Left lung (tissue), 14 donors: ENCODE measurements at regions of chr3 and their contacts with region 1.

Region 1: DNA sequence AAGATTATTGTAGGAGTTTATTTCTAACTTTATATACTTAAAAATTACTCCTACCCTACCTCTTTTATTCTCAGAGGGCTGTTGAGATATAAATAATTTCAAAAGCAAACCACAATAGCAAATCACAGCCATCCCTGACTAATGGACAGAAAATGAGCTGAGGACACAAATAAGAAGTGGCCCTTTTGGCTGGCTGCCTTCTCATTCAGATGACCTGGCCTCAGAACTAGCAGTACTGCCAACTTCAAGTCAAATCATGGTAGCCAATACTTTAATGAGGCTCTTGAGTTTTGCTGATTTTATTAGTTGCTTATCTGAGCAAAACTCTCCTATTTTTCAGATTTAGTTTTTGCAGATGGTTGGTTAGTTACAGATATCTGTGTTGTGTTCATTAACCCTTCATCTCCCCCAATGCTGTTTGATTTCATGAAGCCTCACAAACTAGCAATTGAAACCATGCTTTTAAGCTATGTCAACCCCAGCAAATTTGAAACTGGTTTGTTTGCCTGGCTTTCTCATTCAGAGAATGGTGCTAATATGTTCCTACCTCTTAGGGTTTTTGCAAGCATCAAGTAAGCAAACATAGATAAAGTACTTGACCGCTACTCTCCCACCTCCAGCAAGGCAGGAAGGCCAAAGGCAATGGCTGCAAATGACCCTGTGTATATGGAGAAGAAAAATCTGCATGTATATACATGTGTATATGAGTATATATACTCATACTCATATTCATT is 73.4 kb upstream of the HACD2 start:
- DNase-seq: peak in 3 of 4 donors; percentile 70 to 84 (median 78)
- ATAC-seq: peak; percentile 56
- H3K4me3 ChIP-seq: no peak overlapping the region
- H3K27ac ChIP-seq: peak overlapping the region; percentile 64 to 86
- H3K4me1 ChIP-seq: peaks cover 60 to 80% of the 10 kb centered on the region in 2 donors
- H3K27me3 ChIP-seq: no peaks in the 10 kb centered on the region
- CTCF ChIP-seq: no peak

Region 2: DNA sequence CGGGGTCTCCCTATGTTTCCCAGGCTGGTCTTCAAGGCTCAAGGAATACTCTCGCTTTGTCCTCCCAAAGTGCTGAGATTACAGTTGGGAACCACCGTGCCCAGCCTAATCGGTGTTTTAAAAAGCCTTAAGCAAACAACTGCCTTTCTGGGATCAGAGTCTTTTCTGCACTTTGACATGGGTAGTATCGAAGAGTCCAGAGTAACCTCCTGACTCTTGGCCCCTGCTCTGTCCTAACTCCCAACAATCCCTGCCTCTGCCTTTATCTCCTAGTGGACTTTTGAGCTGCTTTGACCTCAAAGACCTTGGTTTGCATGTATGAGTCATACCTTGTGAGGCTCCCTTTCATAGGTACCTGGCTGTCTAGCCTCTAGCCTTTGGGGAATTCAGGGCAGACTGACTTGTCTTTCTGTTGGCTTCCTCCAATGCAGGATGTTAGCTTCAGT is 52.5 kb before region 1 on chr3:
- intact Hi-C with region 1: no loop called
- DNase-seq: no peak
- ATAC-seq: peak; percentile 72
- H3K4me3 ChIP-seq: no peak overlapping the region
- H3K27ac ChIP-seq: peak overlapping the region; percentile 48 to 79
- H3K4me1 ChIP-seq: peaks cover 4 to 18% of the 10 kb centered on the region in 2 donors
- H3K27me3 ChIP-seq: no peaks in the 10 kb centered on the region
- CTCF ChIP-seq: no peak

Region 3: DNA sequence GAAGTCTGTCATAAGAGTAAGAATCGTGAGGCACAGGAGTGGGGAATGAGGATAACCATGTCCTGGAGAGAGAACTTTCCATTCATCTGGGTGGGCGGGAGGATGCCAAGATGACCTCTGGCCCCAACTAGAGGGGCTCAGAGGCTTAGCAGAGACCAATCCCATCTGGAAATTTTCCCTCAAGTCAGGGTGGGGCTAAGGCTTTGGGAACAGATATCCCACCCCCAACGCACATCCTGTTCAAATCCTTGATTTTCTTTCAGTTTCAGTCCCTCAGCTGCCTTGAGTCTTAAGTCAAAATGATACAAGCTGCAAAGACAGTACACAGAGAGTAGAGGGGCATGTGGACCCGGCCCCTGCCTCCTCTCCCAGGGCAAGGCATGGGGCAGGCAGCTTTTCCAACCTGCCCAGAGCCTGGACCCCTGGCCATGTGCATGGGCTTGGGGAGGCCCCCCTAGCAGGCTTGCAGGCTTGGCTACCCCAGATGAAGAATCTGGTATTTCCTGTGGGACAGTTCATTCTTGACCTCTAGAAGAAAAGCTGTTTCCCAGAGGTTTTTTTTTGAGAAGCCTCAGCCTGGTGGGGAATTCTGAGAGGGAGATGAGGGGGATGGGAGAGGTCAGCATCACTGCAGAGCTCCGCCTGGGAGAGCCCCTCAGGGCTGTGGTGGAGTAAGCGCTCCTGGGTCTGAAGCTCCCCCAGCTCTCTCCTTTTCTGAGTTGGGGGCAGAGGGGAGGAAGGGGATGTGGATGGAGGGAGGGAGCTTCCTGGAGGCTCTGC is 36.3 kb after region 1 on chr3:
- intact Hi-C with region 1: loop called in 1 of 2 experiments (anchors 5 kb)
- DNase-seq: no peak
- ATAC-seq: no peak
- H3K4me3 ChIP-seq: no peak overlapping the region
- H3K27ac ChIP-seq: peak overlapping the region; percentile 48 to 74
- H3K4me1 ChIP-seq: peaks cover 19 to 48% of the 10 kb centered on the region in 2 donors
- H3K27me3 ChIP-seq: no peaks in the 10 kb centered on the region
- CTCF ChIP-seq: no peak

Region 4: GRCh38 chr3:123778991-123779622 is 120.8 kb after region 1 on chr3:
- intact Hi-C with region 1: no loop called
- DNase-seq: no peak
- ATAC-seq: peak; percentile 32
- H3K4me3 ChIP-seq: no peak overlapping the region
- H3K27ac ChIP-seq: no peak overlapping the region
- H3K4me1 ChIP-seq: peaks cover 3 to 8% of the 10 kb centered on the region in 2 donors
- H3K27me3 ChIP-seq: no peaks in the 10 kb centered on the region
- CTCF ChIP-seq: no peak

Region 5: DNA sequence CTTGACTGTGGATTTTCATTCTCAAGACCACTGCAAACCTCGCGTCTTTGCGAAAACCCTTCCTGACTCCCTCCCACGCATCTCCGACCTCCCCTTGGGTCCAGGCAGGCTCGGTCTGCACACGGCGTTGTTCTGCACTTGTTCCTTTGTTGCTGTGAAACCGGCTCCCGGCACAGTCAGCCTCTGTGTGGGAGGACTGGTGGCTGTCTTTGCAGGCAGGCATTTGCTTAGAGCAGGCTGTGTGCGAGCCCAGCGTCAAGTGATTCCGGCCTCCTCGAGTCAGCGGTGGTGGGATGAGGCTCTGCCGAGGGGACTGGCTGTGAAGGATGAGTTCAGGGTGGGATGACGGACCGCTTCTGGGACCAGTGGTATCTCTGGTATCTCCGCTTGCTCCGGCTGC is 436.2 kb after region 1 on chr3:
- intact Hi-C with region 1: no loop called
- DNase-seq: no peak
- ATAC-seq: no peak
- H3K4me3 ChIP-seq: no peak overlapping the region
- H3K27ac ChIP-seq: no peak overlapping the region
- H3K4me1 ChIP-seq: no peaks in the 10 kb centered on the region
- H3K27me3 ChIP-seq: no peaks in the 10 kb centered on the region
- CTCF ChIP-seq: no peak